HepG2 (cell line): ENCODE measurements at regions of chr22 and their contacts with region 1.

Region 1: GRCh38 chr22:39013942-39014722 is at the start of gene APOBEC3C:
- DNase-seq: peak; percentile 75
- ATAC-seq: peak; percentile 94
- H3K4me3 ChIP-seq: peak within 1 kb of the TSS; percentile 77 to 86 (median 78)
- H3K27ac ChIP-seq: peak within 1 kb of the TSS; percentile 67
- H3K4me1 ChIP-seq: peaks cover 49% of the 10 kb centered on the region
- H3K27me3 ChIP-seq: no peaks in the 10 kb centered on the region; a peak in 2 of 5 replicates
- CTCF ChIP-seq: peak; percentile 44
- EP300 ChIP-seq: no peak
- POLR2A ChIP-seq: peak; percentile 71 to 81
- RAD21 ChIP-seq: no peak
- total RNA-seq, gene APOBEC3C: 8.9 and 10.8 TPM in 2 replicates

Region 2: GRCh38 chr22:39117585-39118191 is 103.6 kb after region 1 on chr22:
- CTCF ChIA-PET with region 1: interaction called, 19 read pairs
- POLR2A ChIA-PET with region 1: no interaction called
- in situ Hi-C with region 1: loop called (anchors 5 kb)
- intact Hi-C with region 1: no loop called
- DNase-seq: peak; percentile 60
- ATAC-seq: peak; percentile 49; the same call in 2 of the 3 replicates
- H3K4me3 ChIP-seq: no peak overlapping the region
- H3K27ac ChIP-seq: no peak overlapping the region
- H3K4me1 ChIP-seq: 0 out of 2 replicates have a peak, but pooled peaks cover 6% of the 10 kb centered on the region
- H3K27me3 ChIP-seq: 0 out of 5 replicates have a peak, but pooled peaks cover 0 to 11% of the 10 kb centered on the region in 2 experiments
- CTCF ChIP-seq: peak; percentile 72
- EP300 ChIP-seq: no peak
- POLR2A ChIP-seq: no peak
- RAD21 ChIP-seq: no peak